Activated B cell treated with CpG ODN at 0.5 μM for 24 hours (primary cell): ENCODE measurements at regions of chr1 and their contacts with region 1.

Region 1: GRCh38 chr1:206635080-206635977 is at the start of gene DYRK3:
- DNase-seq: peak; percentile 86
- ATAC-seq: peak; percentile 91
- H3K4me3 Mint-ChIP-seq: peak within 1 kb of the TSS; percentile 89
- H3K27ac Mint-ChIP-seq: peak within 1 kb of the TSS; percentile 76
- H3K4me1 Mint-ChIP-seq: peaks cover 24% of the 10 kb centered on the region
- H3K27me3 Mint-ChIP-seq: peaks cover 2% of the 10 kb centered on the region
- CTCF ChIP-seq: no peak
- total RNA-seq, gene DYRK3: 0.33 and 0.37 TPM in 2 replicates

Region 2: DNA sequence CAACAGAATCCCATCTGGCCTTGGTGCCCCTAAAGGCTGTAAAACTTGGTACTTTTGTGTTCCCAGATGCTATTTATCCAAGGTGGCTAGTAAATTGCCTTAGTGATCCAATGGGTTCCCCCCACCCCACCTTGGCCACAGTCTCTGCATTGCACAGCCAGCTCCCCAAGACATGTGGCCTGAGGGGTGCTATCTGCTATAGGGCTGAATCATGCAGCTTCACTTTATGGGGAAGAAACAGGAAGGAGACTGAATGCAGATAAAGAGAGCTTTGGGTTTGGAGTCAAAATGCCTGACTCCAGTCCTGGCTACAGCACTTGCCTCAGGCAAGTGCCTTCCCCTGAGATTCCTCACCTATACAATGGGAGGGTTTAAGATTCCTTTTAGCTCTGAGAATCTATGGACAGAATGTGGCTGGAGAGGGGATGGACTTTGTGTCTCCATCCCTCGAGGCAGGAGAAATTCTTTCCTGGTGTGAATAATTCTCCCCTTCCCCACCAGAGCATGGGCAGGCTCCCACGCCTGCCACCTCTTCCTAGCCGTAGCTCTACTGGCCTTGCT is 575.9 kb before region 1 on chr1:
- CTCF ChIA-PET with region 1: no interaction called
- POLR2A ChIA-PET with region 1: no interaction called
- intact Hi-C with region 1: no loop called
- DNase-seq: no peak
- ATAC-seq: no peak
- H3K4me3 Mint-ChIP-seq: peak overlapping the region; percentile 44
- H3K27ac Mint-ChIP-seq: peak overlapping the region; percentile 84
- H3K4me1 Mint-ChIP-seq: peaks cover 76% of the 10 kb centered on the region
- H3K27me3 Mint-ChIP-seq: no peaks in the 10 kb centered on the region
- CTCF ChIP-seq: no peak

Region 3: DNA sequence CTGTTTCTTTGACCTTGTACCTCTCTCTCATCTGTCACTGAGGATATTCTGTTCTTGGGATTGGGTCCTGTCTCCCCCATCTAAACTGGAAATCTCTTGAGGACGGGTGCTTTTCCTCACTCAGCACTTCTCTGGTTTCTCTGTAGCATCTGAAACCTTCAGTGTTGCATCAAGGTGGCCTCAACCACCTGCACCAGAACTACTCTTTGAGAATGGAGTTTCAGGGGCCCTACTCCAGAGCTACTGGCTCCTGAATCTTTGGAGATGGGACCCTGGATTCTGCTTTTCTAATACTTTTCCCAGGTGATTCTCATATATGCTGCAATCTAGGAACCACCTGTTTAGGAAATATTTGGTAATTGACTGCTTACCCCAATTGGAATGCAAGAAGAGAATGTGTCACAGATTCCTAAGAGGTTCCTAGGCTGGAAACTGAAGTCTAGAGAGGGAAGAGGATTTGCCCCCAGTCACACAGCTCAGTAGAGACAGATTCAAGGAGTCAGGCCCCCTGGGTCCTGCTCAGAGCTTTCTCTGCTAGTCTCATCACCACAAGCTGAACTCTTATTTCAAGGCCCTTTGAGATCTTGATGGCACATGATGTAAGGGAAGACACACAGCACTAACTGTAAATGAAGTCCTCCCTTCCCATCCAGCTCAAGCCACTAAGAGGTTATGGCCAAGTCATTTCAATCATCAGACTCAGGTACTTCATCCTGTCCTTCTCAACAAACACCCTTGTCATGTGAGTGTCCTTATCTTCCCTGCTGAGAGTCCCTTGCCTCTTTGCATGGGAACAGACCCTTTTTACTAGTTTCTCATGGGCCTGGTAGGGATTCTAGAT is 71.7 kb before region 1 on chr1:
- CTCF ChIA-PET with region 1: no interaction called
- POLR2A ChIA-PET with region 1: no interaction called
- intact Hi-C with region 1: no loop called
- DNase-seq: no peak
- ATAC-seq: peak; percentile 3
- H3K4me3 Mint-ChIP-seq: peak overlapping the region; percentile 63
- H3K27ac Mint-ChIP-seq: peak overlapping the region; percentile 73
- H3K4me1 Mint-ChIP-seq: peaks cover 98% of the 10 kb centered on the region
- H3K27me3 Mint-ChIP-seq: no peaks in the 10 kb centered on the region
- CTCF ChIP-seq: no peak

Region 4: DNA sequence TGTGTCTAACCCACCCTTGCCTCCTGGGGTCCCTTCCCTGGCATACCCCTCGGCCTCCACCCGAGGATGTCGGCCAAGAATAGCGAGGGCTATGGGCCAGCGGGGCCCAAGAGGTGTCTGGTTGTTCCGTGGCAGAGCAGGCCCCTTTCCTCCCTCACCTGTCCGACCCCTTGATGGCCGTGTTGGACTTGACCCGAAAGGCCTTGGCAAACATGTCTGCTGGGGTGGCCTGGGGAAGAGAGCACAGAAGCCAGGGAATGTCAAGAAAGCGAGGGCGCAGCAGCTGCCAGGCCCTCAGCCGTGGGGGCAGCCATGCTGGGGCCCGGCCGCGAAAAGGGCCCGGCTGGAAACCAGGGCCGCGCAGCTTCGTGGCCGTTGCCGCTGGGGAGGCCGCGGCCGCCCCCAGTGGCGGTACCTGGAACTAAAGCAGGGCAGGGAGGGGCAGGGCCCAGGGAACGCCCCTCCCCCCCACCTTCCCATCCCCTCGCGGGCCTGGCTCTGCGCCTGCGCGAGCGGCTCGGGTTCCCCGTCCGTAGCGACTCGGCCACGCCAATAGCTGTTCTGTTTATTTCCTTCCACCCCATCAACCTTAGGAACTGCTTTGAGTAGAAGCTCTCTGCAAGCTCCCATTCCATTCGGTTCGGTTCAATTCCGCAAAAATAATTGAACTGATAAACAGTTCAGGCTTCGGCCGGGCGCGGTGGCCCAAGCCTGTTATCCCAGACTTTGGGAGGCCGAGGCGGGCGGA is 23.0 kb before region 1 on chr1 and contains the start of gene EIF2D:
- CTCF ChIA-PET with region 1: interaction called, 7 read pairs
- POLR2A ChIA-PET with region 1: interaction called, 15 read pairs
- intact Hi-C with region 1: loop called (anchors 1 kb)
- DNase-seq: peak; percentile 95
- ATAC-seq: peak; percentile 98
- H3K4me3 Mint-ChIP-seq: peak within 1 kb of the TSS; percentile 96
- H3K27ac Mint-ChIP-seq: peak within 1 kb of the TSS; percentile 97
- H3K4me1 Mint-ChIP-seq: peaks cover 30% of the 10 kb centered on the region
- H3K27me3 Mint-ChIP-seq: no peaks in the 10 kb centered on the region
- CTCF ChIP-seq: peak; percentile 72
- total RNA-seq, gene EIF2D: 61.2 and 65.4 TPM in 2 replicates

Region 5: GRCh38 chr1:206706298-206706791 is 71.0 kb after region 1 on chr1:
- CTCF ChIA-PET with region 1: interaction called, 3 read pairs
- POLR2A ChIA-PET with region 1: interaction called, 16 read pairs
- intact Hi-C with region 1: no loop called
- DNase-seq: no peak
- ATAC-seq: peak; percentile 14
- H3K4me3 Mint-ChIP-seq: peak overlapping the region; percentile 18
- H3K27ac Mint-ChIP-seq: peak overlapping the region; percentile 33
- H3K4me1 Mint-ChIP-seq: peaks cover 91% of the 10 kb centered on the region
- H3K27me3 Mint-ChIP-seq: no peaks in the 10 kb centered on the region
- CTCF ChIP-seq: no peak

Region 6: DNA sequence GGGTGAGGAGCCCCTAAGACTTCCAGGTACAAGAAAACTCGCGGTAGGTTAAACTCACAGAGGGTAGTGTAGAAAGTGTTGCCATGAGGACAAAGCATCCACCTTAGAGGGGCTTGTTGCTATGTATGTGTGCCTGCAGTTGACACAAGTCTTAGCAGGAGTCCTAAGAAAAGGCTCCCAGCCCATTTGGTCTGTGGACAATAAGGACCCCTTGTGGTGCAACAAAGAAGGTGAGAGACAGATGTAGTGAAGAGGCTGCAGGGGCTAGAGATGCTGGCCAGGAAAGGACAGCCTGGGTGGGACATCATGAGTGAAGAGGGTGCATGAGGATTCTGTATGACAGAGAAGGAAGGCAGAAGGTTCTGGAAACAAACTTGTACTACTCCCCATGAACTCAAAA is 173.3 kb after region 1 on chr1:
- CTCF ChIA-PET with region 1: interaction called, 6 read pairs
- POLR2A ChIA-PET with region 1: no interaction called
- intact Hi-C with region 1: loop called (anchors 1 kb)
- DNase-seq: no peak
- ATAC-seq: peak; percentile 94
- H3K4me3 Mint-ChIP-seq: no peak overlapping the region
- H3K27ac Mint-ChIP-seq: no peak overlapping the region
- H3K4me1 Mint-ChIP-seq: peaks cover 32% of the 10 kb centered on the region
- H3K27me3 Mint-ChIP-seq: no peaks in the 10 kb centered on the region
- CTCF ChIP-seq: no peak

Region 7: DNA sequence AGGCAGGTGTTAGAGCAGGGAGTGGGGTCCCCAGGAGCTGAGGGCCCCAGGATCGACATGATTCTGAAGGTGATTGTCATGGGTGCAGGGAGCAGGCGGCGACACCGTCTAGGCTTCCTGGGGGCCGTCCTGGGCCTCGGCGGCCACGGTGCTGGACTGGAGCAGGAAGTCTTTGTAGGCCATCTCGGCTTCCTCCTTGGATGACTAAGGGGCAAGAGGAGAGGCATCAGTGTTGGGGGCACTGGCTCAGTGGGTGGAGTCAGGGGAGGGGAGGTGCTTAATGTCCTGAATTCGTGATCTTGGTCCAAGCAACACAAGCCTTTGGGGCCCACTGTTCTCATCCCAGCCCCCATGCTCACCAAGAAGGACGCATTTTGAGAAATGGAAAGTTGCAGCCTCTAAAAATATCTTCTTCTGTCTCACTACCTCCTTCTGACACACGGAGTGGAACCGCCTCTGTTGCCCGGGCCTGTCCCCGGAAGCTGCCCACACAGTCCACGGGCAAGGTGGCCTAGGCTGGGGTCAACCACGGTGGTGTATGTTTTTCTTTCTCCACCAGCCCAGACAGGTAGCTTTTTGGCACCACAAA is 295.0 kb after region 1 on chr1:
- CTCF ChIA-PET with region 1: interaction called, 5 read pairs
- POLR2A ChIA-PET with region 1: interaction called, 10 read pairs
- intact Hi-C with region 1: loop called (anchors 2 kb)
- DNase-seq: peak; percentile 72
- ATAC-seq: peak; percentile 83
- H3K4me3 Mint-ChIP-seq: peak overlapping the region; percentile 79
- H3K27ac Mint-ChIP-seq: peak overlapping the region; percentile 99
- H3K4me1 Mint-ChIP-seq: peaks cover 67% of the 10 kb centered on the region
- H3K27me3 Mint-ChIP-seq: no peaks in the 10 kb centered on the region
- CTCF ChIP-seq: no peak

Region 8: GRCh38 chr1:207040181-207040533 is 404.8 kb after region 1 on chr1:
- CTCF ChIA-PET with region 1: no interaction called
- POLR2A ChIA-PET with region 1: no interaction called
- intact Hi-C with region 1: no loop called
- DNase-seq: no peak
- ATAC-seq: no peak
- H3K4me3 Mint-ChIP-seq: no peak overlapping the region
- H3K27ac Mint-ChIP-seq: no peak overlapping the region
- H3K4me1 Mint-ChIP-seq: peaks cover 2% of the 10 kb centered on the region
- H3K27me3 Mint-ChIP-seq: peaks cover 2% of the 10 kb centered on the region
- CTCF ChIP-seq: no peak

Region 9: DNA sequence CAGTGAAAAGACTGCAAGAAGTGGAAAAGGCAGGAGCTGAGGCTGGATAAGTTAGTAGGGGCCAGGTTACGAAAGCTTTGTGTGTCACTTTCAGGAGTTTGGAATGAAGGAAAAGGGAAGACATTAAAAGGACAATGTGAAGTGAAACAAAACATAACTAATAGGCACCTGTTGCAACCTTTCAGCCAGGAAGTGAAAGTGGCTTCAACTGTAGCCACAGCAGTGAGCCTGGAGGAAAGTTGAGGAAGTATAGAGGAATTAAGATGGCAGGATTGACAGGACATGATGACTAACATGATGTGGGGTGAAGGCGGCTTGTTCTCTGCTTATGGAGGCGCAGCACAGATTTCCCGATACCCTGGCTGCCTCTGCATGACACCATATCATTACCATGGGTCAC is 537.6 kb after region 1 on chr1:
- CTCF ChIA-PET with region 1: no interaction called
- POLR2A ChIA-PET with region 1: no interaction called
- intact Hi-C with region 1: no loop called
- DNase-seq: no peak
- ATAC-seq: no peak
- H3K4me3 Mint-ChIP-seq: no peak overlapping the region
- H3K27ac Mint-ChIP-seq: peak overlapping the region; percentile 0
- H3K4me1 Mint-ChIP-seq: peaks cover 8% of the 10 kb centered on the region
- H3K27me3 Mint-ChIP-seq: no peaks in the 10 kb centered on the region
- CTCF ChIP-seq: no peak

Region 10: DNA sequence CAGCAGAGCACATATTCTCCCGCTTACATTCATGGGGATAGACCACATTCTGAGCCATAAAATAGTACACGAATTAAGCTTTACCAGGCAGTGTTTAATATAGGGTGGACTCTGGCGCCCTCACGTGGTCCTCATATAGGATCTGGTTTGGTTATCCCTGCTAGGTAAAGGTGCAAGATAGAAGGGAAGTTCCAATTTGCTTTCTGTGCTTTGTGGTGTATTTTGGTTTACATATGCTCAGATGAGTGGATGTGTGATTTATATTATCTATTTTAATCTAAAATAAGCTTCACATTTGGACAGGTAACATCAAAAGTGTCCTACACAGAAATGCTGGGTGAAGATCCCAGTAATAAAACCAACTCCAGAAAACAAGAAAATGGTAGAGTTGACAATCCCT is 864.2 kb after region 1 on chr1:
- CTCF ChIA-PET with region 1: interaction called, 3 read pairs
- POLR2A ChIA-PET with region 1: no interaction called
- intact Hi-C with region 1: loop called (anchors 1 kb)
- DNase-seq: peak; percentile 42
- ATAC-seq: peak; percentile 61
- H3K4me3 Mint-ChIP-seq: no peak overlapping the region
- H3K27ac Mint-ChIP-seq: peak overlapping the region; percentile 64
- H3K4me1 Mint-ChIP-seq: peaks cover 38% of the 10 kb centered on the region
- H3K27me3 Mint-ChIP-seq: no peaks in the 10 kb centered on the region
- CTCF ChIP-seq: peak; percentile 60